KBM-7 (cell line): ENCODE measurements at regions of chr1 and their contacts with region 1.

Region 1: DNA sequence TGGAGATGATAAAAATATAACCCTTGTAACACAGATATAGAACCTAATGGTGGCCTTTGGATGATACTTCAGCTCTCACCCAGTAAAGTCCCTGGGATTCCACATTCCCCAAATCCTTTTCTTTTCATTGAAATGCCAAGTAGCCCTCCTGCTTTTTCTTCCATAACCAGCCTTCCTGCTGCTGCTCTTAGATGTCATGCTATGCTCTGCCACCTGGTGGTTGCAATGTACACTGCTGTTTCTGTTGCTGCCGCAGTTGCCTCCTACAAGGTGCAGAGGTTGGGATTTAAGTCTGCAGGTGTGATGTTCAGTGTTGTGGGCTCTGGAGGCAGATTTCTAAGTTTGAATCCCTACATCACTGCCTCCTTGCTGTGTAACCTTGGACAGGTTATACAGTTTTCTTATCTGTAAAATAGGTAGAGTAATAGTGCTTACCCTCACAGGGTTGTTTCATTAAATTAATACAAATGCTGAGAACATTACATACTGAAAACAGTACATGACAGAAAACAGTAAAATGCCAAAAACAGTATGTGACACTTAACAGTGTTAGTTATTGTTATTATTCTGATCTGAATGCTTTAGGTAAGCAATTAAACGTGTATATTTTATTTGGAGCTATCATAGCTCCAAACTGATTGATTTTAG is 64.3 kb downstream of the CAMSAP2 start:
- DNase-seq: peak; percentile 75

Region 2: GRCh38 chr1:200639790-200640669 is 163.0 kb before region 1 on chr1:
- in situ Hi-C with region 1: loop called (anchors 25 kb)
- DNase-seq: peak; percentile 91

Region 3: DNA sequence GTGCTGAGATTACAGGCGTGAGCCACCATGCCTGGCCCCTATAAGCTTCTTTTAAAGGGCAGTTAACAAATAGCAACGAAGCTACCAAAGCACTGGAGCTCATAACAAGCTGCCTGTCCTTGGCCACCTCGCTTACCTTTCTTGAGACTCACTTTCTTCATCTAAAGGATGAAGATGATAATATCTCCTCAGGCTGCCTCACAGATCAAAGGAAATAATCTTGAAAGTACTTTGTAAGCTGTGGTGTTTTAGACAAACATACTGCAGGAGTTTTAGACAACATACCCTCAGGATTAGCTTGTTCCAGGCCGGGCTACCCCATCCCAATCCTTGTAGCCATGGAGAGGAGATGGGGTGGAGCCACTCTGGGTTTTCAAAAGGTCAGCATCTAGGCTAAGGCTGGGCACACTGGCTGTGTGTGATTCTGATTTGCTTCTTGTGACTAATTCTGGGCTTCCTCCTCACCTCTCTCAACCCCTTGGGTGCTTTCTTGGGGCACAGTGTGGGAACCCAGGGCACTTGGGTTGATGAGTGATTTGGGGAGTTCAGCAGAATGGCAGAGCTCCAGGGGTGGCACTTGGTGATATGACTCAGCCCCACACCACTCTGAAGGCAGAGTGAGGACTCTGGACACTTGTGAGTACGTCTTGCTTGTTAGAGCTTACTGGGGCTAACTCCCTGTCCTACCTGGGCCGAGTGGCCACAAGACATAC is 75.0 kb after region 1 on chr1:
- in situ Hi-C with region 1: no loop called
- DNase-seq: no peak